ENCODE measurements at regions of chr14 and their contacts with region 1.

Region 1: DNA sequence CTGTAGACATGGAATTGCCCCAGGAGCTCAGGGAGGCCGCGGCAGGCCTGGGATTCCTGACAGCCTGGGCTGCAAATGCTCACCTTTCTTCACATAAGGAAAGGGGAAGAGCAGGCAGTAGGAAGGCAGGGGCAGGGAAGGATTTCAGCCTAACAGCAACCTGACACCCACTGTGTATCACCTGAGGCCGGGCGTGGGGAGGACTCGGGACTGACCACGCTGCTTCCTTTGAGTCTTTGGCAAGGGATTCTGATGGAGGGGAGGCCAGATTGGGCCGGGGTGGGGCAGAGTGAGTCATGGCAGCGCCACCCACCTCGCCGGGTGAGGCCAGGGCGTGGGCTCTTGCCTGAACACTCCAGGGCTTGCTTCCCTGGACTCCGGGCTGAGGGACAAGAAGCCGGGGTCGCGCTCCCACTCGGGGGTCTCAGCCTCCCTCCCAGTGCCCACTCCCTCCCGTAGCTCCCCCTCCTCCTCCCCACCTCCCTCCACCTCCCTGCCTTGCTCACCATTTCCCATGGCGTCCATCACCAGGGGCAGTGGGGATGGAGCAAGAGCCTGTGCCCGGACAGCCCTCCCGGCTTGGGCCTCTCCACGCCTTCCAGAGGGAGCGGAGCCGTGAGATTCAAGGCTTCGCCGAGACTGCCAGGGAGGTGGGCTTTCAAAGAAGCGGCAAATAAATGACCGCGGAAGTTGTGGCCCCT is 247.9 kb upstream of the RTL1 start:
- DNase-seq: peak; percentile 90
- ATAC-seq: peak; percentile 95
- H3K4me3 ChIP-seq: peak overlapping the region; percentile 26; the same call in 1 of the 2 replicates
- H3K27ac ChIP-seq: peak overlapping the region; percentile 78
- H3K4me1 ChIP-seq: peaks cover 25% of the 10 kb centered on the region
- H3K27me3 ChIP-seq: no peaks in the 10 kb centered on the region
- CTCF ChIP-seq: no peak

Region 2: DNA sequence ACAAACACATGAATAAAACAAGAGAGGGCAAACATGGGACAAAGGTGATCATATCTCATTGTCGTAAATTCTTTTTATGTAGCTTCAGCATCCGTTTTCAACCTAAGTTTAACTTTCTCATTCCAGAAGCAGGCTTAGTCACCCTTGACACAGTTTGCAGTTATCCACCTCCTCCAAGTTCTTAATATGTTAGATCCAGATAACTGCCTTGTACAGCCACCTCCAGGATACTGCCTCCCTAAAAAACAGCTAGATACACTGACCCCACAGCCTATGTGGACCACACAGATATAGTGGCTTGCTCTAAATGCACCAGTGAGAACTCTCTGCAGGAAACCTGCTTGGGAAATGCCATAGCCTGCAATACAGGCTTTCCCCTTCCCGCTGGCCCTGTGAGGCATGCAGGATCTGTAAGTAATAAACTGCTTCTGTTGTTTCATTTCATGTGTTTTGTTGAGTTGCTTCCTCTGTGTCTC is 236.8 kb before region 1 on chr14:
- CTCF ChIA-PET with region 1: no interaction called
- POLR2A ChIA-PET with region 1: no interaction called
- intact Hi-C with region 1: loop called (anchors 10 kb)
- DNase-seq: peak; percentile 75
- ATAC-seq: peak; percentile 83
- H3K4me3 ChIP-seq: peak overlapping the region; percentile 13; the same call in 1 of the 2 replicates
- H3K27ac ChIP-seq: peak overlapping the region; percentile 62
- H3K4me1 ChIP-seq: peaks cover 28% of the 10 kb centered on the region
- H3K27me3 ChIP-seq: no peaks in the 10 kb centered on the region
- CTCF ChIP-seq: no peak

Region 3: GRCh38 chr14:101072945-101073597 is 78.3 kb before region 1 on chr14:
- CTCF ChIA-PET with region 1: no interaction called
- POLR2A ChIA-PET with region 1: no interaction called
- intact Hi-C with region 1: loop called (anchors 2 kb)
- DNase-seq: peak; percentile 99
- ATAC-seq: peak; percentile 96
- H3K4me3 ChIP-seq: no peak overlapping the region; the same call in 1 of the 2 replicates
- H3K27ac ChIP-seq: peak overlapping the region; percentile 87
- H3K4me1 ChIP-seq: peaks cover 25% of the 10 kb centered on the region
- H3K27me3 ChIP-seq: no peaks in the 10 kb centered on the region
- CTCF ChIP-seq: peak; percentile 37